Posterior cingulate gyrus (tissue), 11 donors: ENCODE measurements at regions of chr9 and their contacts with region 1.

Region 1: GRCh38 chr9:27125030-27125429 is 16.0 kb downstream of the TEK start:
- DNase-seq: peak in 9 of 10 donors; percentile 16 to 93 (median 66)

Region 2: GRCh38 chr9:27005491-27005890 is 119.5 kb before region 1 on chr9 and contains the start of gene LRRC19:
- intact Hi-C with region 1: no loop called
- DNase-seq: no peak

Region 3: GRCh38 chr9:27033823-27034403 is 91.1 kb before region 1 on chr9:
- intact Hi-C with region 1: no loop called
- DNase-seq: peak in 5 of 10 donors; percentile 32 to 73 (median 59)

Region 4: GRCh38 chr9:27194401-27195091 is 69.5 kb after region 1 on chr9:
- intact Hi-C with region 1: loop called (anchors 10 kb)
- DNase-seq: no peak